ENCODE measurements at regions of chr3 and their contacts with region 1.

Region 1: DNA sequence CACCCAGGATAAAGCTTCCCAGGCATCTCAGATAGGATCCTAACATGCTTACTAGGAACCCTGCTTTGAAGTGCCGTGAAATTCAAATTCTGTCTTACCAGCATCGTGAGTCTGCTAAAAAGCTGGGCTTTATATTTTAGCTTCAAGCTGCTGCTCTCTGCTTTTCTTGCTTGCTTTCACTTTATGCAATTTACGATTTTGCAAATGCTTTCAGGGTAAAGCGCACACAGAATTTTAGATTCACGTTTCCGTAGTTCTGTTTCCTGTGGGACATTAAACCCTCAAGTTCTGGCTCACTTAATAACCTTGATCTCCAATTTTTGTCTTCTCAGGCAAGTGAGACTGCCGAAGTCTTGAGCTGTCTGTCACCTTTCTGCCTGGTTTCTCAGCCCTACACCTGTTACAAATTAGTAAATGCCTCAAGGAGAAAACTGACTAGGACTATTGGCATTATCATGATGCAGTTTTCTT is 170.5 kb upstream of the TGFBR2 start:
- DNase-seq: no peak
- ATAC-seq: peak; percentile 39
- H3K4me3 Mint-ChIP-seq: peak overlapping the region; percentile 59
- H3K27ac Mint-ChIP-seq: peak overlapping the region; percentile 66
- H3K4me1 Mint-ChIP-seq: peaks cover 23% of the 10 kb centered on the region
- H3K27me3 Mint-ChIP-seq: no peaks in the 10 kb centered on the region
- CTCF ChIP-seq: no peak

Region 2: DNA sequence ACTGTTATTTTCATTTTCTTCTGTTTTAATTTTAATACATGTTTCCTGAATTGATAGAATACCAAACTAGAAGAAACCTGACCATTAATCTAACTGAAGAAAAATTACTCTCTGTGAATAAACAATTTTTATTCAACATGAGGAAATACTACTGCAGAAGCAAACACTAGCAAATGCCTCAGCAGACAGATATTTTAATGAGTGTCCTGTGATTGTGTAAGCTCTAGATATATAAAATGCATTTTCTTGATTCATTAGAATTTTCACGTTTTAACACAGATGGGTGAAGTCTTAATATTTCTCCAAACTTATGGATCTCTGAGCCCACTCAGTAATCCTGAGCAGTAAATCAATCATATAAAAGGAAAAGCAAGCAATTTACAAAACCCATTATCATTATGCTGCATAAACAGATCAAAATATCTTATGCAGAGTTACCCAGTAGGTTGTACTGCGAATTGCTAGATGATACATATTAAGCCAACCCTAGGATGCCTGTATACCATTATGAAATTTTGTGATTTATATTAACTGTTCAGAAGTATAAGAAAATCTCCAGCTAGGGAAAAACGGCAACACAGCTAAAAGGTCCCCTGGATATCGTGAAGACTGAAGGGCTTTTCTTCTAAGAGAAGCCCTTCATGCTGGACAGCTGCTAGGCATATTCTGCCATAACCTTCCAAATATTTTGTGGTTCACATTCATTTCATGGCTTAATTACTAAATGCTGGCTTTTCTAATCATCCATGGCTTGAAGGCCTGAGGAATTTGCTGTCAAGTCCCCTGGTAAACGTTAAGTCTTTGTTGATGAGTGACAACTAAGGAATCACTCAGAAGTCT is 12.8 kb after region 1 on chr3:
- CTCF ChIA-PET with region 1: interaction called, 18 read pairs
- POLR2A ChIA-PET with region 1: no interaction called
- intact Hi-C with region 1: no loop called
- DNase-seq: no peak
- ATAC-seq: no peak
- H3K4me3 Mint-ChIP-seq: no peak overlapping the region
- H3K27ac Mint-ChIP-seq: no peak overlapping the region
- H3K4me1 Mint-ChIP-seq: no peaks in the 10 kb centered on the region
- H3K27me3 Mint-ChIP-seq: no peaks in the 10 kb centered on the region
- CTCF ChIP-seq: no peak

Region 3: DNA sequence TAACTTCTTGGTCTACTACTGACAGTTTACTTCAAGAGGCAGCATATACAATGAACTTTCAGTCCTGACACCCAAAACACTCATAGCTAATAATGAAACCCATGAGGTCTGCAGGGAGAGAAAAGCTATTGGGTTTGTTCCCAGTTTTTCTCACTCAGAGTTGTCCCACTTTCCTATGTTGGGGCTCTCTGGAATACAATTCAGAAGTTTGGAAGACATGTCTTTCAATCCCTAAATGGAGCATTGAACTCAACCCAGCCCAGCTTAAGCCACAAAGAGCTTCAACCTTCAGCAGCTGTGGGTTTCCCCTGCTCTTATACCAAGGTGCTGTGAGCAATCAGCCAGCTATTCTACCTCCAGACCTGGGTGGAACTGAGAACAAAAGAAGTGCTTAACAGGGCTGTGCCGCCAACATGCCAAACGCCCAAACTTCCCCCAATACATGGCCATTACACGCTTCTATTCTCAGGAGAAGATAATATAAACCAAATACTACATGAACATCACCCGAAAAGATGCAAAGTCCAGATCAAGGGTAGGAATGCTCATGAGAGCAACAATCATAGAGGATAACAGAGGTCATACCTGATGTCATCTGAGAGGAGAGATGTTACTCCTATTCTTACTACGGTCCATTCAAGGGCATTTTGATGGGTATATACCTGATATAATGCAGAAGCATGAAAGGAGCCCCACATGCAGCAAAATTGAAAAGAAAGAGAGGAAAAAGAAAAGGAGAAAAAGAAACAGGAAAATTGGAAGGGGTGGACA is 39.3 kb after region 1 on chr3:
- CTCF ChIA-PET with region 1: no interaction called
- POLR2A ChIA-PET with region 1: no interaction called
- intact Hi-C with region 1: no loop called
- DNase-seq: peak; percentile 57
- ATAC-seq: peak; percentile 87
- H3K4me3 Mint-ChIP-seq: no peak overlapping the region
- H3K27ac Mint-ChIP-seq: peak overlapping the region; percentile 58
- H3K4me1 Mint-ChIP-seq: peaks cover 47% of the 10 kb centered on the region
- H3K27me3 Mint-ChIP-seq: no peaks in the 10 kb centered on the region
- CTCF ChIP-seq: no peak

Measured in activated CD8-positive, alpha-beta T cell treated with anti-CD3 and anti-CD28 coated beads for 36 hours (primary cell).